ENCODE measurements at regions of chr1 and their contacts with region 1.

Region 1: DNA sequence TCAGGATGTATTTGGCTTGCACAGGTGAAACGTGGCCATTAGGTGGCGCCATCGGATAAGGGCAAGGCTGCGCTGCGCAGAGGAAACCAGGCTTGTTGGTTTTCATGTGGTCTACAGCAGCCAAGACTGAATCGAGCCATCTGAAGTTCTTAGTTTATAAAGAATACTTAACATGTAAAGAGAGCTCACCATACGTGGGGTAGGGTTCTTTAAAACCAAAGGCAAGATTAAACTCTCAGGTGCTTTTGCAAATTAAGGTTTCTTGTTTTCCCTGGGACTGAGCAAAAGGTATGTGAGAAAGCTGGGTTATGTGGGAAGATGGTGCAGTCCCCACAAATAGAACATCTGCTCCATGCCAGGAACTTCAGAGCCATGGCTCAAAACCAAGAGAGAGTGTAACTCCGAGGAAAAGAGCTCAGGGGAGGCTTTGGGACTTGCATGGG is 9.3 kb downstream of the MASP2 start:
- DNase-seq: peak; percentile 85
- H3K4me3 Mint-ChIP-seq: no peak overlapping the region
- H3K27ac Mint-ChIP-seq: no peak overlapping the region
- H3K4me1 Mint-ChIP-seq: no peaks in the 10 kb centered on the region
- H3K27me3 Mint-ChIP-seq: no peaks in the 10 kb centered on the region
- CTCF ChIP-seq: peak; percentile 94

Region 2: DNA sequence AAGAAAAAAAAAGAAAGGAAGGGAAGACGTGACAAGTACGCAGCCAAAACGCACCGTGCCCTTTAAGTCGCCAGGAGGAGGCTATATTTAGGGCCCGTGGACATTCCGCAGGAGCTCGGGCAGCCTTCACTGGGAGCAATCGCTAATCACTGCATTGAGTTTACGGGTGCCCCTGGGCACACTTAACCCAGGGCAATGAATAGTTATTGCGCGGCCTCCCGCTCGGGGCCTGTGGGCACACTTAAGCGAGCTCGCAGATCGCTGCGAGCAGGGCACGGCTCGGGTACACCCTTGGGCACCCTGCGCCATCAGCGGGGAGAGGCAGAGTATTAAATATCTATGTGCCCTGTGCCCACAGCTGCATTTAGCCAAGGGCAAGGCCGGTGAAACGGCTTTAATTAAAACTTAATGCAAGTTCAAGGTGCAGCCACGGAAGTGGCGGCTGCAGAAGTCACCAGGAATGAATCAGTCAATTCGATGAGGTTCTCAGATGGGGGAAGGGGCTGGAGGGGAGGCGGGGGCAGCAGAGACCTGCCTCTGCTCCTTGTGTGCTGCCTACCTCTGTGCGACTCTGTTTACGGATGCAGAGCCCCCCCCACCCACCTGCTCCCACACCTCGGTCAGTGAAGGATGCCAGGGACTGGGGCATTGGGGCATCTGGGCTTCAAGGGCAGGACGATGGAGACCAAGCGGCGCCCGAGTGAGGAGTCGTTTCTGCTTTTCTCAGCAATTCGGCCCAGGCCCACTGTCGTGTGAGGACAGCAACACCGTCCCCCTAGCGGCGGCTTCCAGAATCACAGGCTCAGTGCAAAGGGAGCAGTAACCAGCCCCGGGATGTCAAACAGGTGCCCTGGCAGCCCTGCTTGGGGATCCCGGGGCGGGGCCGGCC is 77.1 kb before region 1 on chr1:
- CTCF ChIA-PET with region 1: no interaction called
- POLR2A ChIA-PET with region 1: no interaction called
- intact Hi-C with region 1: no loop called
- DNase-seq: peak; percentile 75
- H3K4me3 Mint-ChIP-seq: no peak overlapping the region
- H3K27ac Mint-ChIP-seq: no peak overlapping the region
- H3K4me1 Mint-ChIP-seq: no peaks in the 10 kb centered on the region
- H3K27me3 Mint-ChIP-seq: no peaks in the 10 kb centered on the region
- CTCF ChIP-seq: peak; percentile 83

Region 3: GRCh38 chr1:10990828-10991227 is 46.9 kb before region 1 on chr1:
- CTCF ChIA-PET with region 1: no interaction called
- POLR2A ChIA-PET with region 1: no interaction called
- intact Hi-C with region 1: no loop called
- DNase-seq: no peak
- H3K4me3 Mint-ChIP-seq: no peak overlapping the region
- H3K27ac Mint-ChIP-seq: no peak overlapping the region
- H3K4me1 Mint-ChIP-seq: no peaks in the 10 kb centered on the region
- H3K27me3 Mint-ChIP-seq: peaks cover 13% of the 10 kb centered on the region
- CTCF ChIP-seq: no peak

Region 4: DNA sequence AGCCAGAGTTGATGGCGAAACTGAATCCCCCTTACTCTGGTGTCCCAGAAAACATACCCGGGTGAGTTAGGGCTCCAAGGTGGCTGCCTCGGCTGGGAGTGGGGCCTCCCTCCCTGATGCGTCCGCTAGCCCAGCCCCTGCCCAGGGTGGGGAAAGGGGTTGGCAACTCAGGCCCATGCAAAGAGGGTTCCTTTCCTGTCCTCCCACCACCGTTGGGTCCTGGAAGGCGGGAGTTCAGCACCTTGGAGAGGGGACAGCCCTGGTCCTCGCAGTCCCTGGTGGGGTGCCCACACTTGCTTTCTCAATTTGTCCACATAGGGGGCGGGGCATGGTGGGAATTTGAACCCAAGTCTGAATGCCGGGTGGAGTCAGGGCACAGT is 16.0 kb after region 1 on chr1:
- CTCF ChIA-PET with region 1: interaction called, 64 read pairs
- POLR2A ChIA-PET with region 1: interaction called, 9 read pairs
- intact Hi-C with region 1: no loop called
- DNase-seq: no peak
- H3K4me3 Mint-ChIP-seq: no peak overlapping the region
- H3K27ac Mint-ChIP-seq: no peak overlapping the region
- H3K4me1 Mint-ChIP-seq: no peaks in the 10 kb centered on the region
- H3K27me3 Mint-ChIP-seq: no peaks in the 10 kb centered on the region
- CTCF ChIP-seq: no peak

Region 5: DNA sequence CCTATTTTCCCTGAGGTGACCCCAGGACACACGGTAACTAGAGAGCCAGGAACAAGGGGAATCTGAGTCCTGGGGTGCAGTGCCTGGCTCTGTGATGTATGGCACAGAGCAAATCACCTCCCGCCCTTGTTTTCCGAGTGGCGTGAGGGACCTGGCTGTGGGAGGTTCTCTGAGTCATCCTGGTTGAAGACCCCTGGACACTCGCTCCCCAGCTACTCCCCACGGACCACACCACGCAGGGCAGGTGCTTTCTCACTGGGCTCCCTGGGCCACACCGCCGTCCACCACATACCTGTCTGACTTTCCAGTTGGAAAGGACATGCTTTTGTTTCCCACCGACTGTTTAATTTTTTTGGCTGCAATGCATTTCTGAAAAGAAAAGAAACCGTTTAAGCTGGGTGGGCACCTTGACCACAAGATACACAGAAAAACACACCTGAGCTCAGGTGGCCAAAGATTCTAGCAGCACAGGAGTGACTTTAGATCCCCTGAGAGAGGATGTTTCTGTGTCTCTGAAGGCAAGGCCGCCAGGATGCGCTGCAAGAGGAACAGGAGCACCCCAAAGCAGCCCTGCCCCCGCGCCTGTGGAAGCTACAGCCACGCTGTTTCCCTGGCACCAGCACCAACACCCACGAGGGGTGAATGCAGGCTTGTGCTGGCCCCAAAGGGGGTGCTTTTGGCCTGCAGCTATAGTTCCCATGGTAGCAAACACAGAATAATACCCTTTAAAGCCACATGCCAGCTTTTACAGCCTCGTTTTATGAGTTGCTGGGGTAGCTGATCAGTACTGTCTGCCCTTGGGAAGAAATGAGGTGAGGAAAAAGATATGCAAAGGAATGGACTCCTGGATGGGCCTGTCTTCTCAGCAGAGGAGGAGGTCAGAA is 30.2 kb after region 1 on chr1:
- CTCF ChIA-PET with region 1: interaction called, 24 read pairs
- POLR2A ChIA-PET with region 1: no interaction called
- intact Hi-C with region 1: no loop called
- DNase-seq: no peak
- H3K4me3 Mint-ChIP-seq: no peak overlapping the region
- H3K27ac Mint-ChIP-seq: no peak overlapping the region
- H3K4me1 Mint-ChIP-seq: no peaks in the 10 kb centered on the region
- H3K27me3 Mint-ChIP-seq: no peaks in the 10 kb centered on the region
- CTCF ChIP-seq: no peak

Region 6: GRCh38 chr1:11248155-11248554 is 210.4 kb after region 1 on chr1:
- CTCF ChIA-PET with region 1: interaction called, 19 read pairs
- POLR2A ChIA-PET with region 1: no interaction called
- intact Hi-C with region 1: loop called (anchors 5 kb)
- DNase-seq: no peak
- H3K4me3 Mint-ChIP-seq: no peak overlapping the region
- H3K27ac Mint-ChIP-seq: no peak overlapping the region
- H3K4me1 Mint-ChIP-seq: no peaks in the 10 kb centered on the region
- H3K27me3 Mint-ChIP-seq: no peaks in the 10 kb centered on the region
- CTCF ChIP-seq: no peak

Region 7: DNA sequence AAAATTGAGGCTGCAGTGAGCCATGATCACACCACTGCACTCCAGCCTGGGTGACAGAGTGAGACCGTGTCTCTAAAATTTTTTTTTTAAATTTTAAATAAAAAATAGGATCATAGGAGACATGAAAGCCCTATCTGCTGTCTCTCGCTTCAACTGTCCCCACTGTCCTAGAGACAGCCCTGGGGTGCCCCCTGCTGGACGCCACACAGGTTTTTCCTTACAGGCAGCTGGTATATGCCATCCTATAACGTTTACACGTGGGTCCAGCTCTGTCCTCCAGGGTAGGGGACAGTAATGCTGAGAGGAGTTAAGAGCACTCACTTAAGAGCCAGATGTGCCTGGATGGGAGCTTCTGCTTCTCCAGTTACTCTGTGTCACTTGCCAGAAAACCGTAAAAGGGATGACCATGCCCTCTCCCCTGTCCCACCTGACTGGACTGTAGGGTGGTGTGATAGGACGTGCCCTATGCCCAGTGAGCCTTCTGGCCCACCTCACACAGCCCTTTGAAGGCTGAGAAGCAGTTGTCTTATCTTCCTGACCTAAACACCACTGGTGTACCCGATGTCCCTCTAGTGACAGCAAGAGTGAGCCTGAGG is 608.0 kb after region 1 on chr1:
- CTCF ChIA-PET with region 1: interaction called, 33 read pairs
- POLR2A ChIA-PET with region 1: interaction called, 3 read pairs
- intact Hi-C with region 1: loop called (anchors 1 kb)
- DNase-seq: peak; percentile 84
- H3K4me3 Mint-ChIP-seq: no peak overlapping the region
- H3K27ac Mint-ChIP-seq: no peak overlapping the region
- H3K4me1 Mint-ChIP-seq: no peaks in the 10 kb centered on the region
- H3K27me3 Mint-ChIP-seq: no peaks in the 10 kb centered on the region
- CTCF ChIP-seq: peak; percentile 88

Measured in MCF 10A (cell line).